Cardiac septum (tissue), 1 donor: ENCODE measurements at regions of chr11 and their contacts with region 1.

Region 1: GRCh38 chr11:9663699-9664275 is at the start of gene SWAP70:
- DNase-seq: peak; percentile 96
- total RNA-seq, gene SWAP70: 27.6 TPM

Region 2: GRCh38 chr11:9573052-9573774 is 90.6 kb before region 1 on chr11 and contains the start of gene WEE1:
- intact Hi-C with region 1: loop called (anchors 5 kb)
- DNase-seq: peak; percentile 99
- total RNA-seq, gene WEE1: 95.1 TPM

Region 3: GRCh38 chr11:9688716-9689511 is 25.1 kb after region 1 on chr11:
- intact Hi-C with region 1: loop called (anchors 2 kb)
- DNase-seq: no peak

Region 4: DNA sequence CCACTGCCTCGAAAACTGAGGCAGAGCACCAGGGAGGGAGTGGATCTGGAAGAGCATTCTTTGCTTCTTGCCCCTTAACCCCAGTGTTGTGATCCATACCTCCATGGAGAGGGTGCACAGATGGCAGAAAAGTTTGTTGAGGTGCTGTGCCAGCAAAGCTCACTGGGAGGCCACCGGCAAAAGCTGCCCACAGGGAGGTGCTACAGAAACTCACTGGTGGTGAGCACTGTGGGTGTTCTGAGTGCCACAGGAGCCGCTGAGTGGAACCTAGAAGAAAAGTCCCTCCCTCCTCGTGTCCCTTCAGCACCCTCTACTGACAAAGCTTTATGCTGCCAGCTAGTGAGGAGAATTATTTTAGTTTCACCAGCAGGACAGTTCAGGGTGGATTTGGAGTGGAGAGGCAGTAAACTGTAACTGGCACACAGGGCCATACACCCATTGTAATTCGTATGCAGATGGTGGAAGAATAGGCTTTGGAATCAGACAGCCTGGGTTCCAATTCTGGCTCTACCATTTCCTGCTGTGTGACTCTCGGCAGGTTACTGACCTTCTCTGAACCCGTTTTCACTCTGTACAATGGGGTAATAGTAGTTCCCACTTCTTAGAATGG is 84.7 kb after region 1 on chr11:
- intact Hi-C with region 1: loop called (anchors 5 kb)
- DNase-seq: no peak